Activated CD4-positive, alpha-beta T cell treated with anti-CD3 and anti-CD28 coated beads for 36 hours (primary cell): ENCODE measurements at regions of chr18 and their contacts with region 1.

Region 1: DNA sequence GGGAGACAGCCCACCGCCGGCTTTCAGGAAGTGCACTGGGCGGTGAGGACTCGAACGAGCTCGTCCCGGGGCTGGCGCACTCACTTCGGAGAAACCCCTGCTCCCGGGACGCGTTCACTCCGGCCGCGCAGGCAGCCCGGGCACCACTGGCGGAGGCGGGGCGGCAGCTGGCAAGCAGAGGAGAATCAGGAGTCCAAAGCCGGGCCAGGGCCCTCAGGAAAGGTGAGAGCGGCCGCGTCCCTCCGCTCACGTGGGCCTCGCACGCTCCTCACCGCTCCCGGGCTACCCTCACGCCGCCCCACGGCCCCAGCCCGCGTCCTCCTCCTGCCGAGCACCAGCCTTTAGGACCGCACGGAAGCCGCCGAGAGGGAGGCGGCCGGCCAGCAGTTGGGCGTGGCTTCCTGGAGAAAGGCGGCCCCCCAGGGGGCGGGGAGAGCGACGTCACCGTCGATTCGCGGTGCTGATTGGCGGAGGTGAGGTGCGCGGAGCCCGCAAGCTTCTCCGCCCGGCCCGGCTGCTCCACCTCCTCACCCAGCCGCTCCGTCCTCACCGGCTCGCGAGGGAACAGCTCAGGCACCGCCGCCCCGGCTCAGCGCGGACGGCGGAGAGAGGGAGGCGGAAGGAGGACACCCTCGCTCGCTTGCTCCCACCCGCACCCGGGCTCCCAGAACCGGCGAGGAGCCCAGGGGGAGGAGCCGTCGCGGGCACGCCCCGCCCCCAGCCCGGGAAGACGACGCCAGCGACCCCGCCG is at the start of gene ZCCHC2:
- DNase-seq: peak; percentile 99
- ATAC-seq: peak; percentile 82
- H3K4me3 Mint-ChIP-seq: peak within 1 kb of the TSS; percentile 95
- H3K27ac Mint-ChIP-seq: peak within 1 kb of the TSS; percentile 94
- H3K4me1 Mint-ChIP-seq: peaks cover 19% of the 10 kb centered on the region
- H3K27me3 Mint-ChIP-seq: no peaks in the 10 kb centered on the region
- total RNA-seq, gene ZCCHC2: 26.1 to 40.1 TPM

Region 2: DNA sequence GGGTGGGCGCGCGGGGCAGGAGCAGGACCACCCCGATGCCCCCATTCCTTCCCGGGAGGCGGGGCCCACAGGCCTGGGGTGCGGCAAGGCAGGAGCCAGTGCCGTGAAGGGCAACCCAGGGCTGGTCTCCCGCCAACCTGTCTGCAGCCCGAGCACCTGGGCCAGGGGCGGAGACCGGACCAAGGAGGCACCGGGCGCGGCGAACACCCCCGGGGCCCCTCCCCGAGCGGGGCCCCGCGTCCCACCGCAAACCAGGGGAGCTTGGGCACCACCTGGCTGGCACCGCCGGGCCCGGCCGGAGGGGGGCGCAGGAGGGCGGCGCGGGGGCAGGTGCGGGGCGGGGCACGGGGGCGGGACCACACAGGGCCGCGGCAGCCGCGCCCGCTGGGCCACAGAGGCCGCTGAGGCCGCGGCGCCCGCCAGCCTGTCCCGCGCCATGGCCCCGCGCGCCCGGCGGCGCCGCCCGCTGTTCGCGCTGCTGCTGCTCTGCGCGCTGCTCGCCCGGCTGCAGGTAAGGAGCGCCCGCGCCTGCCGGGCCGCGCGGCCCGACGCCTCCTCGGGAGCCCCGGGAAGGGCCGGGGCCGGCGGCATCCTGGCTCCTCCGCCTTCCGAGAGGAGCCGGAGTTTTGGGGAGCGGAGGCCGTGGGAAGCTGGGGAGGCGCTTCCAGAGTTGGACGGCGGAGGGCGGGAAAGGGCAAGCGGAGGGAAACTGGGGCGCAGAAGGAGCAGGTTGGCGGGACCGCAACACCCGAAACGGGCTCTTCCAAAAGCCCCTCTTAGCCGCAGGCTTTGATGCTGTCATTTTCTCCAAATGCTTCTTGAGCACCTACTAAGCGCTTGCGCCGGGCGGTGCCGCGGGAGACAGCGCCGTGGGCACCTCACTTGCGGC is 197.5 kb before region 1 on chr18 and contains the start of gene TNFRSF11A:
- CTCF ChIA-PET with region 1: no interaction called
- POLR2A ChIA-PET with region 1: no interaction called
- intact Hi-C with region 1: loop called (anchors 1 to 5 kb)
- DNase-seq: peak; percentile 85
- ATAC-seq: peak; percentile 77
- H3K4me3 Mint-ChIP-seq: peak within 1 kb of the TSS; percentile 78
- H3K27ac Mint-ChIP-seq: peak within 1 kb of the TSS; percentile 64
- H3K4me1 Mint-ChIP-seq: peaks cover 29% of the 10 kb centered on the region
- H3K27me3 Mint-ChIP-seq: peaks cover 70% of the 10 kb centered on the region
- total RNA-seq, gene TNFRSF11A: 6.9 to 9.3 TPM

Region 3: GRCh38 chr18:62486304-62486964 is 36.2 kb before region 1 on chr18:
- CTCF ChIA-PET with region 1: no interaction called
- POLR2A ChIA-PET with region 1: no interaction called
- intact Hi-C with region 1: loop called in 1 of 2 experiments (anchors 1 kb)
- DNase-seq: peak; percentile 73
- ATAC-seq: peak; percentile 96
- H3K4me3 Mint-ChIP-seq: no peak overlapping the region
- H3K27ac Mint-ChIP-seq: no peak overlapping the region
- H3K4me1 Mint-ChIP-seq: peaks cover 16% of the 10 kb centered on the region
- H3K27me3 Mint-ChIP-seq: peaks cover 20% of the 10 kb centered on the region

Region 4: GRCh38 chr18:62584241-62585120 is 61.8 kb after region 1 on chr18:
- CTCF ChIA-PET with region 1: interaction called, 5 read pairs
- POLR2A ChIA-PET with region 1: interaction called, 6 read pairs
- intact Hi-C with region 1: loop called (anchors 1 kb)
- DNase-seq: peak; percentile 93
- ATAC-seq: peak; percentile 71
- H3K4me3 Mint-ChIP-seq: peak overlapping the region; percentile 1
- H3K27ac Mint-ChIP-seq: peak overlapping the region; percentile 91
- H3K4me1 Mint-ChIP-seq: peaks cover 39% of the 10 kb centered on the region
- H3K27me3 Mint-ChIP-seq: no peaks in the 10 kb centered on the region

Region 5: GRCh38 chr18:63155169-63155852 is 632.6 kb after region 1 on chr18:
- CTCF ChIA-PET with region 1: no interaction called
- POLR2A ChIA-PET with region 1: no interaction called
- intact Hi-C with region 1: loop called in 1 of 2 experiments (anchors 10 kb)
- DNase-seq: peak; percentile 89
- ATAC-seq: peak; percentile 66
- H3K4me3 Mint-ChIP-seq: peak overlapping the region; percentile 73
- H3K27ac Mint-ChIP-seq: peak overlapping the region; percentile 95
- H3K4me1 Mint-ChIP-seq: peaks cover 99% of the 10 kb centered on the region
- H3K27me3 Mint-ChIP-seq: no peaks in the 10 kb centered on the region

Region 6: GRCh38 chr18:63367053-63367953 is 844.6 kb after region 1 on chr18 and contains the start of gene KDSR:
- CTCF ChIA-PET with region 1: no interaction called
- POLR2A ChIA-PET with region 1: no interaction called
- intact Hi-C with region 1: loop called (anchors 1 to 10 kb)
- DNase-seq: peak; percentile 92
- ATAC-seq: peak; percentile 85
- H3K4me3 Mint-ChIP-seq: peak within 1 kb of the TSS; percentile 96
- H3K27ac Mint-ChIP-seq: peak within 1 kb of the TSS; percentile 85
- H3K4me1 Mint-ChIP-seq: peaks cover 36% of the 10 kb centered on the region
- H3K27me3 Mint-ChIP-seq: no peaks in the 10 kb centered on the region
- total RNA-seq, gene KDSR: 72.6 to 78.6 TPM

Region 7: DNA sequence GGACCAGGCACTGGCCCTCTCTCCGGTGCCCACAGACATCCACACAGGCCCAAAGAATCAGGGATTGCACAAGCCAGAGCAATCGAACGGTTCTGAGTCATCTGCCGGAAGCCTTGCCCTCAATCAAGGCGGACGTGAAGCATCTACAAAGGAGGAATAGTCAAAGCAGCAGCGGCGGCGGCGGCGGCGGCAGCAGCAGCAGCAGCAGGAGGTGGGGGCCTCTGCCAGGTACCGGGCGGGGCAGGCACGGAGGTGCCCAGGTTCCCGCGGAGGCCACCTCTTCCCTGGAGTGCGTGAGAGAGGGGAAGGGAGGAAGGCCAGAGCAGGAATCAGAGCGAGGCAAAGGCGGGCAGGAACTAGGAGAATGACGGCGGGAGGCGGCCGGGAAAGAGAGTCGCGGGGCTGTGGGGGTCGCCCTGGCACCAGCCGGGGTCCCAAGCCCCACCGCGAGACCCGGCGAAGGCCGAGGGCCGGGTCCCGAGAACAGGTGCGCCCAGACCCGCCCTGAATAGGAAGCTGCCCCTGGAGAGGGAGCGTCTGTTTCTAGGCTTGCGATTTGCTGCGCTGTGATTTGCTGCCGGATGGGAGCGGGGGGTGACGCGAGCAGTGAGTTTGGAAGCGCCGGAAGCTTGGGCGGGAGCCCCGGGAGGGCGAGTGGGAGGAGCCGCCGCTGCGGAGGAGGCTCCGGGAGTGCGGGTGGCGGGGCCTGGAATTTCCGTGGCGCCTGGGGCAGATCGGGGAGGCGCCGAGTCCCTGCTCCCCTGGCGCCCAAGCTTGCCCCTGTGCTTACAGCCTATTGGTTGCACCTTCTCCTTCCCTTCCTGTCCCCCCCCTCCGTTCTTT is 1447.5 kb after region 1 on chr18 and contains the start of gene SERPINB8:
- CTCF ChIA-PET with region 1: no interaction called
- POLR2A ChIA-PET with region 1: no interaction called
- intact Hi-C with region 1: loop called in 1 of 2 experiments (anchors 10 kb)
- DNase-seq: peak; percentile 92
- ATAC-seq: peak; percentile 90
- H3K4me3 Mint-ChIP-seq: peak within 1 kb of the TSS; percentile 85
- H3K27ac Mint-ChIP-seq: peak within 1 kb of the TSS; percentile 92
- H3K4me1 Mint-ChIP-seq: peaks cover 38% of the 10 kb centered on the region
- H3K27me3 Mint-ChIP-seq: no peaks in the 10 kb centered on the region
- total RNA-seq, gene SERPINB8: 16.0 to 17.1 TPM